ENCODE measurements at regions of chr15 and their contacts with region 1.

Region 1: DNA sequence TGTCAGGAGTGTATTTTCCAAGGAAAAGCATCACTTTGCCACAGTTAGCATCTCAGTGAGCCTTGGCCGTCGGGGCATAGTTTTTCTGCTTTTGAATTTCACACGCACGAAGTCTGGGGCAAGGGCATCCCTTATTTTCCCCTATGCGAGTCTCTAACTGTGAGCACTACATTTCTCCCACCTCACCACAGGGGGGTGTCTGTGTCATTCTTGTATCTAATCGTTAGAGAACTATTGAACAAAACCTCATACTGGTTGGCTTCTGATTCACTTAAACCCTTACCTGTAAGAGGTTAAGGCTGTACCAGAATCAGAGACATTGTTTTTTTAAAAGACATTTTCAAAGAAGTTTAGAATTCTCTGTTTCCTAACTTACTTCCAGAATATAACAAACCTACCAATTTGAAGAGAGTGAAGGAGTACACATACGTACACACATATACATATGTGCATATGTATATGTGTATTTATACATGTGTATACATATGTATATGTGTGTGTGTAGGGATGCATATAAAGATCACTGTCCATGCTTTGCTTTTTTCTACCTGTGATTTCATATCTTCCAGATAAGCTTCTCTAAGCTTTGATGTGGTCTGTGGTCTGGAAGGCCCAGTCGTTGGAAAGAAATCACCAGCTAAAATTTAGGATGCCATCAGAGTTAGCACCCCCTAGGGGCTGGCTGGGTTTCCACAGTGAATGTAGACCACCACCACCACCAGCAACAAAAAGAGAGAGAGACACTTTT is 49.4 kb downstream of the MYZAP start:
- DNase-seq: no peak
- ATAC-seq: peak; percentile 39
- H3K4me3 Mint-ChIP-seq: no peak overlapping the region
- H3K27ac Mint-ChIP-seq: no peak overlapping the region
- H3K4me1 Mint-ChIP-seq: no peaks in the 10 kb centered on the region
- H3K27me3 Mint-ChIP-seq: peaks cover 38% of the 10 kb centered on the region

Region 2: DNA sequence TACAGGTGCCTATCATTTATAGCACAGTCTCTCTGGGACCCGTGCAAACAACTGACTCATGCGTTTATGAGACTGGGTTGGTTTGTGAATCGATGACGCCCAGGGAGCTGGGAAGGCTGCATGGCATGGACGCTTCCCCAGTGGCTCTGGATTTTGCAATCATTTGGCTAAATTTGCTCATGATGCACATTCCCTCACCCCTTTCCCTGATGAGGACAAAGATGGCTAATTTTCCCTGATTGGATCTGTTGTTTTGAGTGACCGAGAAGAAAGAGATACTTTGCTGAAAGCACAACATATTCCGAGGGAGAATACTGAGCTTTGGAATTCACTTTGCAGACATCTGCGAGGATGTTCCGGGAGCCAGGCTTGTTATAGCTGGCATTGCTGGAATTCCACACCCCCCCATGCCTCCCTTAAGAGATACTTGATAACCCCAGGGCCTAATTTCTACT is 213.7 kb before region 1 on chr15:
- CTCF ChIA-PET with region 1: no interaction called
- DNase-seq: no peak
- ATAC-seq: no peak
- H3K4me3 Mint-ChIP-seq: no peak overlapping the region
- H3K27ac Mint-ChIP-seq: no peak overlapping the region
- H3K4me1 Mint-ChIP-seq: no peaks in the 10 kb centered on the region
- H3K27me3 Mint-ChIP-seq: peaks cover 17% of the 10 kb centered on the region

Region 3: GRCh38 chr15:57654153-57654852 is 13.2 kb after region 1 on chr15:
- CTCF ChIA-PET with region 1: interaction called, 12 read pairs
- DNase-seq: no peak
- ATAC-seq: no peak
- H3K4me3 Mint-ChIP-seq: no peak overlapping the region
- H3K27ac Mint-ChIP-seq: no peak overlapping the region
- H3K4me1 Mint-ChIP-seq: peaks cover 17% of the 10 kb centered on the region
- H3K27me3 Mint-ChIP-seq: peaks cover 21% of the 10 kb centered on the region

Measured in activated CD8-positive, alpha-beta memory T cell treated with anti-CD3 and anti-CD28 coated beads, Interleukin-2, amount 10 ng/mL, durations not matched to agents 7 days and 5 days (primary cell).